ENCODE measurements at regions of chr12 and their contacts with region 1.

Region 1: DNA sequence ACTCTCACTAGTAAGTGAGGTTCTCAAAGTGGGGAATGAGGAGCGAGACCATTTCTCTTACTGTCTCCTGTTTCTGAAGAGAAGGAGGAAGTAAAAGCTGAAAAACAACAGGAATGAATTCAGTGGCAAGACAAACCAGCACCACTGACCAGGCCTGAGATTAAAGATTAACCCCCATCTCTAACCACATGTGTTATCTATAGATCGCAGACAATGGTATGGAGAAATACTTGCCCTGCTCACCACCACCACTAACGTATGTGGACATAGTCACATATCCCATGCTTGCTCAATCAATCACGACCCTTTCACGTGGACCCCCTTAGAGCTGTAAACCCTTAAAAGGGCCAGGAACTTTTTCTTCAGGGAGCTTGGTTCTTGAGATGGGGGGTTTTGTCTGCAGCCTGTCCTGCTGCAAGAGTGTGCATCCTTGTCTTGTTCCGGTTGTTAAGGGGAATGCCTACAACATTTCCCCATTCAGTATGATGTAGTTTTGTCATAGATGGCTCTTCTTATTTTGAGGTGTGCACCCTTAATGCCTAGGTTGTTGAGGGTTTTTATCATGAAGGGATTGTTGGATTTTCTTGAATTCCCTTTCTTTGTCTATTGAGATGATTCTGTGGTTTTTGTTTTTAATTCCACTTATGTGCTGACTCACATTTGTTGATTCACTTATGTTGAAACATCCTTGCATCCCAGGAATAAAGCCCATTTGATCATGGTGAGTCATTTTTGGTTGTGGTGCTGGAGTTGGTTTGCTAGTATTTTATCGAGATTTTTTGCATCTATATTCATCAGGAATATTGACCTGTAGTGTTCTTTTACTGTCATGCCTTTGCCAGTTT is 698.8 kb upstream of the LMO3 start:
- DNase-seq: no peak
- H3K4me3 ChIP-seq: no peak overlapping the region
- H3K27ac ChIP-seq: no peak overlapping the region
- H3K4me1 ChIP-seq: no peaks in the 10 kb centered on the region
- H3K27me3 ChIP-seq: no peaks in the 10 kb centered on the region
- CTCF ChIP-seq: no peak

Region 2: GRCh38 chr12:17326649-17327048 is 21.9 kb after region 1 on chr12:
- intact Hi-C with region 1: loop called (anchors 1 kb)
- DNase-seq: no peak
- H3K4me3 ChIP-seq: no peak overlapping the region
- H3K27ac ChIP-seq: no peak overlapping the region
- H3K4me1 ChIP-seq: no peaks in the 10 kb centered on the region
- H3K27me3 ChIP-seq: no peaks in the 10 kb centered on the region
- CTCF ChIP-seq: no peak

Measured in tibial artery (tissue), 4 donors.